ENCODE measurements at regions of chr3 and their contacts with region 1.

Region 1: DNA sequence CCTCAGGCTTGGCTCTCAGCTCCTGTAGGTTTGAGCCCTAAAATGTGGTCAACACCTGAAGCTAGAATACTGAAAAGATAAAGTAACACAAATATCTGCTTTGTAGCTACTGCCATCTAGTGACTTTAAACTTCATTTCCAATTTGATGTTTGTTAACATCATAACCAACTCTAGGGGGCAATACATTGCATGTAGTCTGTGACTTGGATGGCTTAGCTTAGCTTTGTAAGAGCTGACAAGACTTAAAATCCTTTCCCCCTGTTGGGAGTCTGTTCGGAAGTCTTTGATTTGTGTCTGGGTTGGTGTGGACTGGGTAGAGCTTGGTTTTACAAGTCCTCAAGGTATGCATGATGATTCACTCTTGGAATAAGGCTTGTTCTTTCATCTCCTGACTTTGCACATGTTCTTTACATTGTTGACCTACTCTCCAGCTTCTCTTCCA is 51.7 kb downstream of the SCN11A start:
- DNase-seq: peak; percentile 79
- ATAC-seq: peak; percentile 78
- H3K4me3 ChIP-seq: no peak overlapping the region
- H3K27ac ChIP-seq: no peak overlapping the region
- H3K4me1 ChIP-seq: peaks cover 1% of the 10 kb centered on the region; the same call in 1 of the 2 replicates
- H3K27me3 ChIP-seq: no peaks in the 10 kb centered on the region
- CTCF ChIP-seq: peak; percentile 99
- POLR2A ChIP-seq: peak; percentile 29; the same call in 1 of the 2 replicates
- RAD21 ChIP-seq: peak; percentile 87

Region 2: GRCh38 chr3:38496131-38496910 is 503.7 kb before region 1 on chr3 and contains the start of gene EXOG:
- CTCF ChIA-PET with region 1: no interaction called
- POLR2A ChIA-PET with region 1: no interaction called
- dilution Hi-C with region 1: no loop called
- in situ Hi-C with region 1: no loop called
- intact Hi-C with region 1: loop called (anchors 10 kb)
- DNase-seq: peak; percentile 89
- ATAC-seq: peak; percentile 85
- H3K4me3 ChIP-seq: peak within 1 kb of the TSS; percentile 91
- H3K27ac ChIP-seq: peak within 1 kb of the TSS; percentile 91
- H3K4me1 ChIP-seq: peaks cover 11% of the 10 kb centered on the region
- H3K27me3 ChIP-seq: no peaks in the 10 kb centered on the region
- CTCF ChIP-seq: peak; percentile 84
- POLR2A ChIP-seq: 0 out of 2 replicates have a peak, but pooled peaks have one; percentile 20
- RAD21 ChIP-seq: peak; percentile 68
- total RNA-seq, gene EXOG: 10.2 and 12.8 TPM in 2 replicates

Region 3: DNA sequence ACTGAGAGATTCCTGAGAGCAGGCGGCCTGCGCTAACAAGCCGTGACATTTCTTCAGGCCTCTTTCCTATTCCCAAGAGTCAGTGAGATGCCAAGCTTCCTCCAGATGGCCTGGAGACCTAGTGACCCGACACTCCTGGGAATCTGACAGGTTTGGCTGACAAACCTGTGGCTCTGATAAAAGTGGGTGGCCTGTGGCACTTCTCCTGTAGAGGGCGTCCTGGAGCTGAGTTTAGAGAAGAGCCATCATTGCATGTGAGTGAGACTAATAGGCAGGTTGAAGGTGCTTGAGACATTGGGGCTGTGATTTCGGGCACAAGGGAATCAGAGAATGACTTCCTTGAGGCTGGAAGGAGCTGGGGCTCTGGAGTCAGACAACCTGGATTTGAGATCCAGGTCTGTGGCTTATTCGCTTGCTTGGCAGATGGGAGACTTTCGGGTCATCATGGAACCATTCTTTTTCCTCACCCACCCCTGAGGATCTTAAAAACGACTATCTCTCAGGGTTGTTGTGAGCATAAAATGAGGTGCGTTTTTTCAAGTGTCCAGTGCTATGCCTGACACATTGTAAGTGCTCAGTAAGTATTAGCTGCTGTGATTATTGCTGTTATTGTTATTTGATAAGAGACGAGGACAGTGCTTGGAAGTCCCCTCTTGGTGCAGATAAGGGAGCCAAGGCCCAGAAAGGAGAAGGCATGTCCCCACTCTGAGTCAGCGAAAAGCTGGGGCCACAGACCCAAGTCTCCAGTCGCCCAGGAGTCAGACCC is 261.2 kb before region 1 on chr3:
- CTCF ChIA-PET with region 1: interaction called, 6 read pairs
- POLR2A ChIA-PET with region 1: no interaction called
- dilution Hi-C with region 1: no loop called
- in situ Hi-C with region 1: no loop called
- intact Hi-C with region 1: loop called (anchors 2 kb)
- DNase-seq: peak; percentile 28
- ATAC-seq: peak; percentile 49; the same call in 1 of the 2 replicates
- H3K4me3 ChIP-seq: no peak overlapping the region
- H3K27ac ChIP-seq: no peak overlapping the region
- H3K4me1 ChIP-seq: no peaks in the 10 kb centered on the region
- H3K27me3 ChIP-seq: 0 out of 2 replicates have a peak, but pooled peaks cover 2% of the 10 kb centered on the region
- CTCF ChIP-seq: peak; percentile 59
- POLR2A ChIP-seq: no peak
- RAD21 ChIP-seq: peak; percentile 62

Region 4: GRCh38 chr3:39025222-39025970 is 25.4 kb after region 1 on chr3:
- CTCF ChIA-PET with region 1: interaction called, 6 read pairs
- POLR2A ChIA-PET with region 1: no interaction called
- dilution Hi-C with region 1: no loop called
- in situ Hi-C with region 1: no loop called
- intact Hi-C with region 1: loop called (anchors 2 kb)
- DNase-seq: no peak
- ATAC-seq: no peak; the same call in 1 of the 2 replicates
- H3K4me3 ChIP-seq: no peak overlapping the region
- H3K27ac ChIP-seq: no peak overlapping the region
- H3K4me1 ChIP-seq: no peaks in the 10 kb centered on the region
- H3K27me3 ChIP-seq: peaks cover 12% of the 10 kb centered on the region
- CTCF ChIP-seq: no peak
- POLR2A ChIP-seq: no peak
- RAD21 ChIP-seq: no peak

Region 5: GRCh38 chr3:39056151-39056550 is 56.1 kb after region 1 on chr3:
- CTCF ChIA-PET with region 1: no interaction called
- POLR2A ChIA-PET with region 1: no interaction called
- dilution Hi-C with region 1: no loop called
- in situ Hi-C with region 1: no loop called
- intact Hi-C with region 1: no loop called
- DNase-seq: no peak
- ATAC-seq: no peak
- H3K4me3 ChIP-seq: no peak overlapping the region
- H3K27ac ChIP-seq: no peak overlapping the region
- H3K4me1 ChIP-seq: peaks cover 2% of the 10 kb centered on the region; the same call in 1 of the 2 replicates
- H3K27me3 ChIP-seq: no peaks in the 10 kb centered on the region
- CTCF ChIP-seq: no peak
- POLR2A ChIP-seq: no peak
- RAD21 ChIP-seq: no peak